ENCODE measurements at regions of chr2 and their contacts with region 1.

Region 1: GRCh38 chr2:197952540-197953202 is 148.3 kb downstream of the PLCL1 start:
- DNase-seq: no peak
- H3K4me3 ChIP-seq: no peak overlapping the region
- H3K27ac ChIP-seq: no peak overlapping the region
- H3K4me1 ChIP-seq: peaks cover 0 to 2% of the 10 kb centered on the region in 2 donors
- H3K27me3 ChIP-seq: no peaks in the 10 kb centered on the region
- CTCF ChIP-seq: no peak
- POLR2A ChIP-seq: no peak

Region 2: DNA sequence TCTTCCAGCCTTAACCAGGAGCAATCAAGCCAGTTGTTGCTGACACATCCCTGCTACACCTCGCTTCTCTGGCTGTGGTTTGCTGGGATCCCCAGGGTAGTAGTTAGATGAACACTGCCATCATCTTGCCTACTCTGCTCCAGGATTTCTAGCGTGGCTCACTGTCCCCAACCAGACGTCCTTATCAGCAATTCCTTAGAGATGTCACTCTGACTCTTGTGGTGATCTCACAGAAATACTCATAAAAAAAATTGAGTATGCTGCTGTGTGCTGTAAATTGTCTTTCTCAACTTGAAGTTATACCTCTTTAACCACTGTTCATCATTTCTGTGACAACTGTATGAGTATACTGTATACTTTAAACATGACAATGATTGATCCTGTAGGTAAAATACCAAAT is 85.0 kb before region 1 on chr2:
- intact Hi-C with region 1: no loop called
- DNase-seq: no peak
- H3K4me3 ChIP-seq: no peak overlapping the region
- H3K27ac ChIP-seq: no peak overlapping the region
- H3K4me1 ChIP-seq: no peaks in the 10 kb centered on the region
- H3K27me3 ChIP-seq: no peaks in the 10 kb centered on the region
- CTCF ChIP-seq: no peak
- POLR2A ChIP-seq: no peak

Region 3: DNA sequence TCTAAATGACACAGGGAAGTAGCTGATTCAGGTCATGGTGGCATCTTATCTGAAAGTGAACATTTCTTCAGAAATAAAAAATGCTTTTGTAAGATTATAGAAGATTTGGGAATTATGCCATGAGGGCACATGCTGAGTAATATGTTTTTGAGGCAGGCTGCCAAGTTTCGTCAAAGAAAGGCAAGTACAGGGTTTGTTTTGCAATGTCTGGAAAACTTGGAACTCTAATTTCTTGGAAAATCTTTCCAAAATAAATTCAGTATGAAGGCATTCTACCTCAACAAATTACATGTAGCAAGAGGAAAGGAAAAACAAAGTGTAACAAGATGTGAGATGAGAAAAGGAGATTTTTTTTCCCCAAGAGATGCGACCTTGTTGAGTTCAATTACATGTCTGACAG is 19.4 kb after region 1 on chr2:
- intact Hi-C with region 1: loop called (anchors 1 kb)
- DNase-seq: peak in 1 of 2 donors; percentile 20
- H3K4me3 ChIP-seq: no peak overlapping the region
- H3K27ac ChIP-seq: no peak overlapping the region
- H3K4me1 ChIP-seq: no peaks in the 10 kb centered on the region
- H3K27me3 ChIP-seq: no peaks in the 10 kb centered on the region
- CTCF ChIP-seq: no peak
- POLR2A ChIP-seq: no peak

Region 4: GRCh38 chr2:198028955-198029354 is 76.3 kb after region 1 on chr2:
- intact Hi-C with region 1: no loop called
- DNase-seq: no peak
- H3K4me3 ChIP-seq: no peak overlapping the region
- H3K27ac ChIP-seq: no peak overlapping the region
- H3K4me1 ChIP-seq: no peaks in the 10 kb centered on the region
- H3K27me3 ChIP-seq: no peaks in the 10 kb centered on the region
- CTCF ChIP-seq: no peak
- POLR2A ChIP-seq: no peak